ENCODE measurements at regions of chr18 and their contacts with region 1.

Region 1: DNA sequence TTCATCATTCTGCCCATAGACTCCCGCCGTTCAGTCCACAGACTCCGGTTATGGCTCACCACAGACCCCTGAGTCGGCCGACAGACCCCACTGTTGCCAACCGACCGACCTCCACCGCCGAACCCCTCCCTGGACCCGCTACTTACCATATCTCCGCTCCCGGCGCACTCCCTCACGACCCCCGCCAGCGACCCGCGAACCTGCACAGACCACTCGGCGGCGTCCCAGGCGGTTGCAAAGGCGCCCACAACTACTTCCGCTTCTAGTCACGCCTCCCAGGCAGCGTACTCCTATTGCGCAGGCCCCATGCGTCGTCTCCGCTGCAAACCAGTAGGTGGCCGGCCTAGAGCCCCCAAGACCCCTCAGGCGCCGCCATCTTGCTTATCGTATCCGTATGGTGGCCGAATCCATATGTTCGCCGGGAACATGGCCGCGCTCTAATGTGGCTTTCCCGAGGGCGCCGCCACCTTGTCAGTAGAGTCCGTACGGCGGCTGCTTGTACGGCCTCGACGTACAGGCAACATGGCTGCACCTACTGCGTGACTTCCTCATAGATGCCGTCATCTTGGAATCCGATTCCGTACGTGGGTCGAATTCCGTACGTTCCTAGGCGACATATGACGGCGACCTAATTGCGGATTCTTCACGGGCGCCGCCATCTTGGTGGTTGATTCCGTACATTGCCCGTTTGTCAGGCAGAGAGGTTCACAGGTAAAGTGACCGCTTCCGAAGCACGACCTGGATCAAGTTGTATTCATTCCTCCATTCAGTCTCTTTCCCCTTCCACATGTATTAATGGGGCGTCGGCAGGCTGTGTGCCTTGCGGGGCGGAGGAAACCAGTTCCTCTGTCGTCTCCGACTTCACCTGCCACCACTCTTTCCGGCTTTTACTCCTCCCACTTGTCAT is at the start of gene CXXC1:
- DNase-seq: peak; percentile 89 to 98 (median 97)
- ATAC-seq: peak; percentile 92
- H3K4me3 ChIP-seq: peak within 1 kb of the TSS; percentile 98
- H3K4me3 Mint-ChIP-seq: peak within 1 kb of the TSS; percentile 91 to 100 (median 98)
- H3K27ac ChIP-seq: peak within 1 kb of the TSS; percentile 97
- H3K27ac Mint-ChIP-seq: peak within 1 kb of the TSS; percentile 94 to 100 (median 99)
- H3K4me1 ChIP-seq: peaks cover 0 to 7% of the 10 kb centered on the region in 2 donors
- H3K4me1 Mint-ChIP-seq: peaks cover 6 to 39% (median 28%) of the 10 kb centered on the region in 7 donors
- H3K27me3 ChIP-seq: no peaks in the 10 kb centered on the region
- H3K27me3 Mint-ChIP-seq: peaks cover 0 to 2% (median 0%) of the 10 kb centered on the region in 5 donors
- total RNA-seq, gene CXXC1: 141 to 197 (median 155) TPM

Region 2: GRCh38 chr18:48842259-48843061 is 1445.2 kb before region 1 on chr18:
- CTCF ChIA-PET with region 1: no interaction called
- POLR2A ChIA-PET with region 1: no interaction called
- intact Hi-C with region 1: loop called in 1 of 2 experiments (anchors 10 kb)
- DNase-seq: peak; percentile 25 to 85 (median 71)
- ATAC-seq: peak; percentile 86
- H3K4me3 ChIP-seq: peak overlapping the region; percentile 37
- H3K4me3 Mint-ChIP-seq: peak overlapping the region; percentile 51 to 80 (median 75)
- H3K27ac ChIP-seq: peak overlapping the region; percentile 48
- H3K27ac Mint-ChIP-seq: peak overlapping the region; percentile 92 to 97 (median 93)
- H3K4me1 ChIP-seq: peaks cover 58 to 72% of the 10 kb centered on the region in 2 donors
- H3K4me1 Mint-ChIP-seq: peaks cover 55 to 90% (median 72%) of the 10 kb centered on the region in 7 donors
- H3K27me3 ChIP-seq: no peaks in the 10 kb centered on the region
- H3K27me3 Mint-ChIP-seq: no peaks in the 10 kb centered on the region

Region 3: DNA sequence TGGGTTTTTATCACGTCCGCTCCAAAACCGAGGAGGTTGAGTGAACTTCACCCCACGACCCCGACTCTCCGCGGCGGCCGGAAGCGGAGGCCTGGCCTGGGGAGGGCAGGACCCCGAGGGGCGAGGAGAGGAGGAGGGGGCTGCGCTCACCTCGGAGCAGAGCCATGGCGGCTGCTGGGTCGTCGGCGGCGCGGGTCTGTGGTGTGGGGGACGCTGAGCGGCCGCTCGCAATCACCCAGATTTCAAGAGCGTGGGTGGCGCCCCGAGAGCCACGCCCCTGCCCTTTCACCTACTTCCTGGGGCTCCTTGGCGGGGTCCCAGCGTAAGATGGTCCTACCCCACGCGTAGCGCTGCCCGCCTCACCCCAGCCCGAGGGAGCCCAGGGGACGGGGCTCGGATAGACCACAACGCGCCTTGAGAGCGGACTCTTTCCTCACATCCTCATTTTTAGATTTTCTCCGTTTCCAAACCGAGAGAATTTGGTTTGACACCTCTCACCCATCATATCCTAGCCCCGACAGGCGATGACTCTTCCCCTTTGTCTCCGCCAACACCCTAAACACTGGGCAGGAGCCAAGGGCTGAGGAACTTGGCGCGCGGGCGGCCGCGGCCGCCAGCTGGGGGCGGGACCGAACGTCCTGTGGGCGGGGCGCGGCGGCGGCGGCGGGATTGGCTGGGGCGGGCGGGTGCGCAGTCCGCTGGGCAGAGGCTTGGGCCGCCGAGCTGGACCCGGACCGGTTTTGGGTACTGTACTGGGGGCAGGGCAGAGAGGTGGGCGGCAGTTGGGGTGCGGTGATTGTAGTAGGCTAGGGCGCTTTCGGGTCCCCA is 474.2 kb before region 1 on chr18 and contains the start of gene ACAA2:
- CTCF ChIA-PET with region 1: no interaction called
- POLR2A ChIA-PET with region 1: no interaction called
- intact Hi-C with region 1: loop called (anchors 1 to 5 kb)
- DNase-seq: peak; percentile 48 to 87 (median 60)
- ATAC-seq: peak; percentile 93
- H3K4me3 ChIP-seq: peak within 1 kb of the TSS; percentile 87
- H3K4me3 Mint-ChIP-seq: peak within 1 kb of the TSS; percentile 89 to 99 (median 96)
- H3K27ac ChIP-seq: peak within 1 kb of the TSS; percentile 90
- H3K27ac Mint-ChIP-seq: peak within 1 kb of the TSS; percentile 91 to 99 (median 97)
- H3K4me1 ChIP-seq: peaks cover 20 to 39% of the 10 kb centered on the region in 2 donors
- H3K4me1 Mint-ChIP-seq: peaks cover 42 to 70% (median 63%) of the 10 kb centered on the region in 7 donors
- H3K27me3 ChIP-seq: no peaks in the 10 kb centered on the region
- H3K27me3 Mint-ChIP-seq: no peaks in the 10 kb centered on the region
- total RNA-seq, gene ACAA2: 15.4 to 94.7 (median 24.4) TPM

Region 4: GRCh38 chr18:50091509-50092244 is 196.0 kb before region 1 on chr18:
- CTCF ChIA-PET with region 1: no interaction called
- POLR2A ChIA-PET with region 1: no interaction called
- intact Hi-C with region 1: no loop called
- DNase-seq: no peak
- ATAC-seq: no peak
- H3K4me3 ChIP-seq: no peak overlapping the region
- H3K4me3 Mint-ChIP-seq: peak overlapping the region in 1 of 10 donors; percentile 6
- H3K27ac ChIP-seq: no peak overlapping the region
- H3K27ac Mint-ChIP-seq: no peak overlapping the region
- H3K4me1 ChIP-seq: no peaks in the 10 kb centered on the region
- H3K4me1 Mint-ChIP-seq: peaks cover 0 to 4% (median 0%) of the 10 kb centered on the region in 7 donors
- H3K27me3 ChIP-seq: no peaks in the 10 kb centered on the region
- H3K27me3 Mint-ChIP-seq: peaks cover 5 to 38% (median 22%) of the 10 kb centered on the region in 5 donors

Region 5: DNA sequence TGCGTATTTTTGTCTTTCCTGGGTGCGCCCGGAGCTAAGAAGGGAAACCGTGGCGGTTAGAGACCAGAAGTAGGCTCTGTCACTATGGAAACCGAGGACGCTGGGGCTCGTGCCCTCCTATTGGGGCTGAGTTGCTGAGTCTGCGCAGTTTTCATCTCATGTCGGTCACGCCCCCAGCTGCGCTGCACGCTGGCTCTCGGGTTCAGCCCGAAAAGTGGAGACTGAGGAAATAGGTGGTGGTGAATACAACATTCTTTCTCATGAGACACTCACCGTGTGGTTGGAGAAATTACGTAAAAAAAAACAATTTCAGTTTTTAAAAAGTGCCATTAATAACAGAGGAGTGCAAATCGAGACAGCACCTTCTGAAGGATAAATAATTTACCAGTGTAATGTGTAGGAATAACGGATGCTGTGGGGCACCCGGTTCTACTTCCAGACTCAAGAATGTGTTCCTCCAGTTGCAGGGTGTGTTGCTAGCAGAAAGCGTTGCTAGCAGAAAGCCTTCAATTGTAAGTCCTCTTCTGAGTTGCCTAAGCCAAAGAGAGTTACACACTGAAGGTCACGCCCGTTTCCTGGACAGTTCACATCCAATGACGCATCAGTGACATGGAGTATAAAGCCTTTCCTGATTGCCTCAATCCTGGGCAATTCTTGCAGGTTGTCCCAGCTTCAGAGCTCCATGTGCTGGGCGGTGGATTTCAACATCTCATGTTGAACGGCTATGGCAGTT is 20.2 kb after region 1 on chr18:
- CTCF ChIA-PET with region 1: no interaction called
- POLR2A ChIA-PET with region 1: interaction called, 9 read pairs
- intact Hi-C with region 1: loop called (anchors 1 kb)
- DNase-seq: peak; percentile 70 to 93 (median 89)
- ATAC-seq: peak; percentile 96
- H3K4me3 ChIP-seq: peak overlapping the region; percentile 45
- H3K4me3 Mint-ChIP-seq: peak overlapping the region; percentile 76 to 97 (median 92)
- H3K27ac ChIP-seq: peak overlapping the region; percentile 65
- H3K27ac Mint-ChIP-seq: peak overlapping the region; percentile 52 to 93 (median 82)
- H3K4me1 ChIP-seq: peaks cover 0 to 8% of the 10 kb centered on the region in 2 donors
- H3K4me1 Mint-ChIP-seq: peaks cover 0 to 20% (median 16%) of the 10 kb centered on the region in 7 donors
- H3K27me3 ChIP-seq: peaks cover 0 to 3% of the 10 kb centered on the region in 2 donors
- H3K27me3 Mint-ChIP-seq: peaks cover 0 to 35% (median 19%) of the 10 kb centered on the region in 5 donors

Region 6: GRCh38 chr18:50374753-50375391 is 87.2 kb after region 1 on chr18 and contains the start of gene SKA1:
- CTCF ChIA-PET with region 1: no interaction called
- POLR2A ChIA-PET with region 1: interaction called, 4 read pairs
- intact Hi-C with region 1: loop called (anchors 1 kb)
- DNase-seq: peak; percentile 85 to 92 (median 89)
- ATAC-seq: peak; percentile 99
- H3K4me3 ChIP-seq: peak within 1 kb of the TSS; percentile 62
- H3K4me3 Mint-ChIP-seq: peak within 1 kb of the TSS; percentile 75 to 90 (median 80)
- H3K27ac ChIP-seq: peak within 1 kb of the TSS; percentile 71
- H3K27ac Mint-ChIP-seq: peak within 1 kb of the TSS; percentile 72 to 91 (median 87)
- H3K4me1 ChIP-seq: peaks cover 0 to 13% of the 10 kb centered on the region in 2 donors
- H3K4me1 Mint-ChIP-seq: peaks cover 0 to 34% (median 14%) of the 10 kb centered on the region in 7 donors
- H3K27me3 ChIP-seq: peaks cover 0 to 6% of the 10 kb centered on the region in 2 donors
- H3K27me3 Mint-ChIP-seq: peaks cover 0 to 8% (median 7%) of the 10 kb centered on the region in 5 donors
- total RNA-seq, gene SKA1: 0.27 to 24.8 (median 0.43) TPM

Region 7: DNA sequence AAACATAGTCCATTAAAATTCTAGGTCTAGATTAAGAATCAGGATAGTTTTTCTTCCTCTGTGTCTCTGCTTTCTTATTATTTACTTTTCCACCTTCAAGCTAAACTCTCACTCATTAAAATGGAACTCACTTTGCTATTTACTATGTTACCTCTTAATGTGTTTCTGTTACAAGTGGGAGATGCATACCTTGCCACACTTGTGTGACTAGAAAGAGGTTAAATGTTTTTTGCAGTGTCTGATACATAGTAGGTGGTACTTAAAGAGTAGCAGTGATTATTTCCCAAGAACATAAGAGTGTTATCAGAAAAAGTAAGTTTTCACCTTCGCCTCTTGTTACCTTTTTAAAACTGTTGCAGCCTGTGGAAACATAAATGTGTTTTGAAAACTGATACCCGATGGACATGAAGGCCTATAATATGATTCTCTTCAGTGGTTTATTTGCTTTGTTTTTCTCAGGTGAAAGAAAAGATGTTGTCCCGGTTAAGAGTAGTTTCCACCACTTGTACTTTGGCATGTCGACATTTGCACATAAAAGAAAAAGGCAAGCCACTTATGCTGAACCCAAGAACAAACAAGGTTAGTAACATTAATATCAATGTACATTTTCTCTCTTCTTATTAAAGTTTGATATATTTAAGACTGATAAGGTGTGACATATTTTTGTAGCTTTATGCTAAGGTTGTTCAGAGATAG is 607.8 kb after region 1 on chr18:
- CTCF ChIA-PET with region 1: no interaction called
- POLR2A ChIA-PET with region 1: no interaction called
- intact Hi-C with region 1: no loop called
- DNase-seq: no peak
- ATAC-seq: no peak
- H3K4me3 ChIP-seq: no peak overlapping the region
- H3K4me3 Mint-ChIP-seq: no peak overlapping the region
- H3K27ac ChIP-seq: no peak overlapping the region
- H3K27ac Mint-ChIP-seq: peak overlapping the region in 2 of 9 donors; percentile 30 to 53
- H3K4me1 ChIP-seq: no peaks in the 10 kb centered on the region
- H3K4me1 Mint-ChIP-seq: peaks cover 5 to 37% (median 29%) of the 10 kb centered on the region in 7 donors
- H3K27me3 ChIP-seq: no peaks in the 10 kb centered on the region
- H3K27me3 Mint-ChIP-seq: no peaks in the 10 kb centered on the region

Region 8: DNA sequence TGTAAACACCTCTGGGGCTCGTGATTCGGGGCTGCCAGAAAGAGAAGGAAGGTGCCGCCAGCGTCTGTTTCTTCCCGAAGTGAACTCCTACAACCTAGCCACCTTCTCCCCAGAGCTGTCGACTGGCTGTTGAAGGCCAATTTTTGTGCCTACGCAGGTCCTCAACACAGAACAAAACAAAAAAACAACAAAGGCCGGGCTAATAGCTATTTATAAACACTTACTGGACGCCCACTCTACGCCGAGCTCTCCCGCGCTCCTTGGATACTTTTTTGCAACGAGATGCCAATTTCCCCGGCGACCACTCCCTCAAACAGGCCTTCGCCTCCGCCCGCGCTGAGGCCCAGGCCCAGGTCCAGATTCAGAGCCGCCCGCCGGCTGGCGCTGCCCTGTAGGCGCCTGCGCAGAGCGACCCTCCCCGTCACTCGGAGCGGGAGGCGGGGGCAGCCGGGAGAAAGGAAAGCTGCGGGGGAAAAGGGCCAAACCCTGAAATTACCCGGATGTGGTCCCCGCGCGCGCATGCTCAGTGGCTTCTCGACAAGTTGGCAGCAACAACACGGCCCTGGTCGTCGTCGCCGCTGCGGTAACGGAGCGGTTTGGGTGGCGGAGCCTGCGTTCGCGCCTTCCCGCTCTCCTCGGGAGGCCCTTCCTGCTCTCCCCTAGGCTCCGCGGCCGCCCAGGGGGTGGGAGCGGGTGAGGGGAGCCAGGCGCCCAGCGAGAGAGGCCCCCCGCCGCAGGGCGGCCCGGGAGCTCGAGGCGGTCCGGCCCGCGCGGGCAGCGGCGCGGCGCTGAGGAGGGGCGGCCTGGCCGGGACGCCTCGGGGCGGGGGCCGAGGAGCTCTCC is 742.2 kb after region 1 on chr18 and contains the start of gene SMAD4:
- CTCF ChIA-PET with region 1: no interaction called
- POLR2A ChIA-PET with region 1: no interaction called
- intact Hi-C with region 1: loop called in 1 of 2 experiments (anchors 10 kb)
- DNase-seq: peak; percentile 95 to 99 (median 97)
- ATAC-seq: peak; percentile 89
- H3K4me3 ChIP-seq: peak within 1 kb of the TSS; percentile 63
- H3K4me3 Mint-ChIP-seq: peak within 1 kb of the TSS; percentile 96 to 100 (median 99)
- H3K27ac ChIP-seq: peak within 1 kb of the TSS; percentile 81
- H3K27ac Mint-ChIP-seq: peak within 1 kb of the TSS; percentile 95 to 100 (median 98)
- H3K4me1 ChIP-seq: peaks cover 13 to 40% of the 10 kb centered on the region in 2 donors
- H3K4me1 Mint-ChIP-seq: peaks cover 35 to 62% (median 57%) of the 10 kb centered on the region in 7 donors
- H3K27me3 ChIP-seq: no peaks in the 10 kb centered on the region
- H3K27me3 Mint-ChIP-seq: no peaks in the 10 kb centered on the region
- total RNA-seq, gene SMAD4: 82.5 to 170 (median 92.5) TPM